ENCODE measurements at regions of chr18 and their contacts with region 1.

Region 1: GRCh38 chr18:70288851-70289328 is at the start of gene SOCS6:
- DNase-seq: peak in 1 of 2 donors; percentile 76
- H3K4me3 ChIP-seq: peak within 1 kb of the TSS; percentile 87 to 93
- H3K27ac ChIP-seq: peak within 1 kb of the TSS; percentile 76 to 96
- H3K4me1 ChIP-seq: peaks cover 8 to 24% of the 10 kb centered on the region in 2 donors
- H3K27me3 ChIP-seq: no peaks in the 10 kb centered on the region
- CTCF ChIP-seq: no peak
- total RNA-seq, gene SOCS6: 5.5 TPM

Region 2: GRCh38 chr18:70205421-70206397 is 83.2 kb before region 1 on chr18 and contains the start of gene RTTN:
- intact Hi-C with region 1: loop called (anchors 2 kb)
- DNase-seq: peak; percentile 68 to 94
- H3K4me3 ChIP-seq: peak within 1 kb of the TSS; percentile 81 to 87
- H3K27ac ChIP-seq: peak within 1 kb of the TSS; percentile 97 to 99
- H3K4me1 ChIP-seq: peaks cover 0 to 5% of the 10 kb centered on the region in 2 donors
- H3K27me3 ChIP-seq: no peaks in the 10 kb centered on the region
- CTCF ChIP-seq: no peak
- total RNA-seq, gene RTTN: 9.5 TPM

Region 3: GRCh38 chr18:70326255-70326654 is 37.4 kb after region 1 on chr18:
- intact Hi-C with region 1: loop called (anchors 2 kb)
- DNase-seq: no peak
- H3K4me3 ChIP-seq: no peak overlapping the region
- H3K27ac ChIP-seq: no peak overlapping the region
- H3K4me1 ChIP-seq: peaks cover 0 to 16% of the 10 kb centered on the region in 2 donors
- H3K27me3 ChIP-seq: no peaks in the 10 kb centered on the region
- CTCF ChIP-seq: no peak

Region 4: DNA sequence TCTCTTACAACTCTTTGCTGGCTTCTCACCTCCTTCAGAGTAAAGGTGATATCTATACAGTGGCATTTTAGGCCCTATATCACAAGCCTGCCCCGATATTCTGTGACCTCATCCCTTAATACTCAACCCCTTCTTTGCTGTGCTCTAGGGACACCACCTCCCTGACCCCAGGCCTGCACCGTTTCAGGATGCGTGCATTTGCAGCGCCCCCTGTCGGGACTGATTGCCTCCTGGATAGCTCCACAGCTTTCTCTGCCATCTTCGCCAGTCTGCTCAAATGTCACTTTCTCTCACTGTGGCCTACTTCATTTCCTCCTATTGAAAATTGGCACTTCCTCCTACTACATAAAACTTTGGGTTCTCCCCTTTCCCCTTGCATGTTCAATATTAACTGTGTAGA is 289.6 kb after region 1 on chr18:
- intact Hi-C with region 1: no loop called
- DNase-seq: no peak
- H3K4me3 ChIP-seq: no peak overlapping the region
- H3K27ac ChIP-seq: no peak overlapping the region
- H3K4me1 ChIP-seq: no peaks in the 10 kb centered on the region
- H3K27me3 ChIP-seq: no peaks in the 10 kb centered on the region
- CTCF ChIP-seq: no peak